ENCODE measurements at regions of chr1 and their contacts with region 1.

Region 1: GRCh38 chr1:210239349-210240111 is 6.9 kb downstream of the SERTAD4 start:
- DNase-seq: peak; percentile 91
- H3K4me3 Mint-ChIP-seq: no peak overlapping the region
- H3K27ac Mint-ChIP-seq: no peak overlapping the region
- H3K4me1 Mint-ChIP-seq: peaks cover 26% of the 10 kb centered on the region
- H3K27me3 Mint-ChIP-seq: peaks cover 25% of the 10 kb centered on the region
- CTCF ChIP-seq: peak; percentile 57

Region 2: DNA sequence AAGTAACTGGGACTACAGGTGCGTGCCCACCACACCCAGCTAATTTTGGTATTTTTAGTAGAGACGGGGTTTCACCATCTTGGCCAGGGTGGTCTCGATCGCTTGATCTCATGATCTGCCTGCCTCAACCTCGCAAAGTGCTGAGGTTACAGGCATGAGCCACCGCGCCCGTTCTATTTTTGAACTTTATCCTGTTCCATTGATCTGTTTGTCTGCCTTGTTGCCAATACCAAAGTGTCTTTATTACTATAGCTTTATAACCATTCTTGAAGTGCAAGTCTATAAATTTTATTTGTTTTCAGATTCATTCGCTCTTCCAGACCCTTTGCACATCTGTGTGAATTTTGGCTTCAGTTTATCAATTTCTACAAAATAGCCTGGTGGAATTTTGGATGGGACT is 273.5 kb before region 1 on chr1:
- CTCF ChIA-PET with region 1: no interaction called
- POLR2A ChIA-PET with region 1: no interaction called
- intact Hi-C with region 1: no loop called
- DNase-seq: no peak
- H3K4me3 Mint-ChIP-seq: no peak overlapping the region
- H3K27ac Mint-ChIP-seq: no peak overlapping the region
- H3K4me1 Mint-ChIP-seq: no peaks in the 10 kb centered on the region
- H3K27me3 Mint-ChIP-seq: no peaks in the 10 kb centered on the region
- CTCF ChIP-seq: no peak

Region 3: GRCh38 chr1:210228158-210228557 is 11.4 kb before region 1 on chr1:
- CTCF ChIA-PET with region 1: interaction called, 10 read pairs
- POLR2A ChIA-PET with region 1: interaction called, 5 read pairs
- intact Hi-C with region 1: no loop called
- DNase-seq: no peak
- H3K4me3 Mint-ChIP-seq: no peak overlapping the region
- H3K27ac Mint-ChIP-seq: no peak overlapping the region
- H3K4me1 Mint-ChIP-seq: peaks cover 5% of the 10 kb centered on the region
- H3K27me3 Mint-ChIP-seq: peaks cover 20% of the 10 kb centered on the region
- CTCF ChIP-seq: no peak

Region 4: DNA sequence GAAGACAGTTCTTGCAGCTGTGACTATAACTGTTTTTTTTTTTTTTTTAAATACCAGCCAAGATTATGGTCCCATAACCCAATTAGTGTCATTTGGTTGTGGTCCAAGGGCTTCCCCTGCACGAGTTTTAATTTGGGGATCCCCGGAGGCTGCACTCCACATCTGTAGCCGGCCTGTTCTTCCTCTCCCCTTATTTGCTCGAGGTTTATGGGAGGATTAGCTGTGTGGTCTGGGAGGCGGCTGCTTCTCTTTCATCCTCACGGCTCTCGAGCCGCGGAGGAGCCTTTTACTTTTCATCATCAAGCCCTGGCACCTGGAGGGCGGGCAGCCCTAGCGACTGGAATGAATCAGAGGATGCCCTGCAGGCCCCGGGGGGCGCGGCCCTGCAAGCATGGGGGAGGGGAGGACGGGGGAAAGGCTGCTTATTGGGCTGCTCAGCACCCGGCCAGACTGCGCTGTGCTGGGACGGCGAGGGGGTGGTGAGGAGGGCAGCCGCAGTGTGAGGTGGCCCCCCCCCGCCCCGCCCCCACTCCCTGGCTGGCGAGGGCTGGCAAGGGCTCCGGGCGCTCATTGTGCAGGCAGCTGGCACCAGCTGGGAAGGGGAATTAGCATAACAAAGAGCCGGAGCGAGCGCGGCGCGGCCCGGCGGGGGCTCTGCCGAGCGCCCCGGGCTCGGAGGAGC is 11.6 kb after region 1 on chr1:
- CTCF ChIA-PET with region 1: interaction called, 9 read pairs
- POLR2A ChIA-PET with region 1: interaction called, 11 read pairs
- intact Hi-C with region 1: no loop called
- DNase-seq: peak; percentile 83
- H3K4me3 Mint-ChIP-seq: peak overlapping the region; percentile 62
- H3K27ac Mint-ChIP-seq: no peak overlapping the region
- H3K4me1 Mint-ChIP-seq: peaks cover 8% of the 10 kb centered on the region
- H3K27me3 Mint-ChIP-seq: peaks cover 54% of the 10 kb centered on the region
- CTCF ChIP-seq: no peak

Region 5: DNA sequence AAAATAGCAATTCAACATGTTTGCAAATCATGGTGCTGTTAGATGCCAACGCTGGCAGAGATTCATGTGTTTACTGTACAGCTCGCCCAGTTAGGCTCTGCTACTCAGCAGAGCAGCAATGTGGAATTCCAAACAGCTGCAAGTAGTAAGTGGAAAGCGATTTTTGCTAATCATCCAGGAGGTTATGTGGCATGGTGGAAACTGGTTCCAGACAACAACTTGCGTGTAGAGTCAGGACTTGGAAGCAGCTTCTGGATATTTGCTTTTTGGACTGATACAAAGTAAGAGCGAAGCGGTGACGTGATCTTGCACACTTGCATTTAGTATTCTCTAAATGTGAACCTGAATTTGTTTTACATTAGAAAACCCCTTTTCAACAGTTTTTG is 62.1 kb after region 1 on chr1:
- CTCF ChIA-PET with region 1: interaction called, 14 read pairs
- POLR2A ChIA-PET with region 1: no interaction called
- intact Hi-C with region 1: no loop called
- DNase-seq: no peak
- H3K4me3 Mint-ChIP-seq: no peak overlapping the region
- H3K27ac Mint-ChIP-seq: no peak overlapping the region
- H3K4me1 Mint-ChIP-seq: peaks cover 12% of the 10 kb centered on the region
- H3K27me3 Mint-ChIP-seq: peaks cover 20% of the 10 kb centered on the region
- CTCF ChIP-seq: no peak

Region 6: GRCh38 chr1:210438928-210439809 is 199.6 kb after region 1 on chr1:
- CTCF ChIA-PET with region 1: no interaction called
- POLR2A ChIA-PET with region 1: no interaction called
- intact Hi-C with region 1: no loop called
- DNase-seq: peak; percentile 62
- H3K4me3 Mint-ChIP-seq: no peak overlapping the region
- H3K27ac Mint-ChIP-seq: no peak overlapping the region
- H3K4me1 Mint-ChIP-seq: peaks cover 6% of the 10 kb centered on the region
- H3K27me3 Mint-ChIP-seq: no peaks in the 10 kb centered on the region
- CTCF ChIP-seq: no peak

Region 7: GRCh38 chr1:210525716-210526454 is 286.4 kb after region 1 on chr1:
- CTCF ChIA-PET with region 1: no interaction called
- POLR2A ChIA-PET with region 1: no interaction called
- intact Hi-C with region 1: no loop called
- DNase-seq: no peak
- H3K4me3 Mint-ChIP-seq: no peak overlapping the region
- H3K27ac Mint-ChIP-seq: no peak overlapping the region
- H3K4me1 Mint-ChIP-seq: no peaks in the 10 kb centered on the region
- H3K27me3 Mint-ChIP-seq: peaks cover 9% of the 10 kb centered on the region
- CTCF ChIP-seq: no peak

Measured in MCF 10A (cell line).